ENCODE measurements at regions of chr5 and their contacts with region 1.

Region 1: GRCh38 chr5:157271740-157272271 is 5.9 kb downstream of the CYFIP2 start:
- DNase-seq: peak; percentile 94
- H3K4me3 Mint-ChIP-seq: peak overlapping the region; percentile 78
- H3K27ac Mint-ChIP-seq: peak overlapping the region; percentile 100
- H3K4me1 Mint-ChIP-seq: peaks cover 86% of the 10 kb centered on the region
- H3K27me3 Mint-ChIP-seq: no peaks in the 10 kb centered on the region

Region 2: DNA sequence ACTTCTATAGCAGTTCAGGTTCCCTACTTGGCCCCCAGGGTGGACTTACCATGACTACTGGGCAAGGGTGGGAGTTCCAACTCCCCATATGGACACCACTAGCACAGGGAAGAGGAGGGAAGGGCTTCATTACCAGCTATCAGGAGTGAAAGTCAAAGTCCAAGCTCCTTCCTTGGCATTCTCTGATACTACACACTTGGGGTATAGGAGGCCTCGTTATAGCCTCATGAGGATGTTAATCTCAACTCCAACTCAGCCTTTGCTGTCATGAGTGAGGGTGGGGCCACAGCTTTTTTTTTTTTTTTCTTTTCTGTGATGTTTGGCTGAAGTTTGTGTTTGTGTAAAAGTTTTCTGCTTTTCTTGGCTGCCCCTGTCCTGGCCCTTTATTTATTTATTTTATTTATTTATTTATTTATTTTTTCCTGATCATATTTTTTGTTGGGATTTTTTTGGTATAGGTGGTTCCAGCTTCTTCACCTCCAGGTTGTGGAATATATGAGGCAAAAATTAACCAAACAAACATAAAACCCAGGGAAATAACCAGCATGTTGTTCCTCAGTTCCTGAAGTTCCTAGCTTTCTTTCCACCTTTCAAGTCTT is 114.4 kb before region 1 on chr5:
- CTCF ChIA-PET with region 1: interaction called, 3 read pairs
- POLR2A ChIA-PET with region 1: interaction called, 11 read pairs
- DNase-seq: no peak
- H3K4me3 Mint-ChIP-seq: peak overlapping the region; percentile 0
- H3K27ac Mint-ChIP-seq: peak overlapping the region; percentile 50
- H3K4me1 Mint-ChIP-seq: peaks cover 75% of the 10 kb centered on the region
- H3K27me3 Mint-ChIP-seq: no peaks in the 10 kb centered on the region

Region 3: DNA sequence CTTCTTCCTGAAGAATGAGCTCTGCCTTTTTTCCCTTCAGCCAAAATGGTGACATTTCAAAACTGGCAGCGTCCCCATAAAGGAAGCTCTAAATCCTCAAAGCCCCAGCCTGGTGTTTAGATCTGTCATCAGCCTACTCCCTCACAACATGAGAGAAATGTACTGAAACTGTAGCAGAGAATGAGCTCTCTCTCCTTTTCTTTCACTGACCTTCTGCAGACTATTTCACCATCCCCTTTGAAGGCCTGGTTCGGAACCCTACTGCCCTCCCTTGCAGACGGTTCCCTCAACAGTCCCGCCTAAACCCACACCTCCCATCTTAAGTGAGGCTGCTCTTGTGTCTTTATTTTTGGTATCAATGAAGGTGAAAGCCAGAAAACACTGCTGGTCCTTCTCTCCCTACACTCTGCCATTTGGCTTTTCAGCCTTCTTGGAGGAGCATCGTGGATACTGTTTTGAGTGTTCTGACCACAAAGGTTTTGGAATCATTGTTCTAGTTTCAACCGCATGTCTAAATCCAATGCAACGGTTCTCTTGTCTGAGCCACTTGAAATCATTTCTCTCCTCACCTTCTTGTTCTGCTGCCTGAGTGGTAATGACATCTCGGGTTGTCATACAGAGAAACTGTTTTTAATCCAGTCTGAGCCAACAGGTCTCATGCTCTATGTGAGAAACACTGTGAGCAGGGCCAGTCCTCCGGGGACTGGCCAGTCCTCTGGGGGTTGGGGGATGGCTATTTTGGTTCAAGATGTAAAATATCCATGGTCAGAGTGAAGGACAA is 52.1 kb before region 1 on chr5:
- CTCF ChIA-PET with region 1: interaction called, 5 read pairs
- POLR2A ChIA-PET with region 1: interaction called, 32 read pairs
- DNase-seq: peak; percentile 36
- H3K4me3 Mint-ChIP-seq: peak overlapping the region; percentile 19
- H3K27ac Mint-ChIP-seq: peak overlapping the region; percentile 90
- H3K4me1 Mint-ChIP-seq: peaks cover 93% of the 10 kb centered on the region
- H3K27me3 Mint-ChIP-seq: no peaks in the 10 kb centered on the region

Region 4: DNA sequence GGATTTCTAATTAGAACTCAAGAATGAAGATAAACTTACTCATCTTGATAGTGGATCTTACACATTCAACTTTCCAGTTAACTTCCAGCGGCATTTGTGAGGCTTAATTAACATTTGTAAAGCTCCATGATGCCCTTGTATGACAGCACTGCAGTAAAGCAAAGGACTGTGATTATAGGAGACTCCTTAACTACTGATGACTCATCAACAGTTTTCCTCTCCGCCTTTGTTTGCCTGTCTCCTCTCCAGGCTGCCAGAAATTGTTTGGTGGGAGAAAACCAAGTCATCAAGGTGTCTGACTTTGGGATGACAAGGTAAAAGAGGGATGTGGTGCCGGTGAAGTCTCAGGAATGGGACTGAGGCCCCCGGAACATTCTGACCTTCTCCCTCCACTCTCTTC is 26.3 kb before region 1 on chr5:
- CTCF ChIA-PET with region 1: interaction called, 6 read pairs
- POLR2A ChIA-PET with region 1: interaction called, 145 read pairs
- DNase-seq: no peak
- H3K4me3 Mint-ChIP-seq: no peak overlapping the region
- H3K27ac Mint-ChIP-seq: peak overlapping the region; percentile 98
- H3K4me1 Mint-ChIP-seq: peaks cover 75% of the 10 kb centered on the region
- H3K27me3 Mint-ChIP-seq: no peaks in the 10 kb centered on the region

Region 5: GRCh38 chr5:157283434-157283833 is 11.6 kb after region 1 on chr5:
- CTCF ChIA-PET with region 1: interaction called, 3 read pairs
- POLR2A ChIA-PET with region 1: interaction called, 56 read pairs
- DNase-seq: peak; percentile 29
- H3K4me3 Mint-ChIP-seq: no peak overlapping the region
- H3K27ac Mint-ChIP-seq: peak overlapping the region; percentile 41
- H3K4me1 Mint-ChIP-seq: peaks cover 66% of the 10 kb centered on the region
- H3K27me3 Mint-ChIP-seq: no peaks in the 10 kb centered on the region

Region 6: GRCh38 chr5:157312492-157312891 is 40.7 kb after region 1 on chr5:
- CTCF ChIA-PET with region 1: interaction called, 27 read pairs
- POLR2A ChIA-PET with region 1: interaction called, 36 read pairs
- DNase-seq: peak; percentile 68
- H3K4me3 Mint-ChIP-seq: no peak overlapping the region
- H3K27ac Mint-ChIP-seq: peak overlapping the region; percentile 37
- H3K4me1 Mint-ChIP-seq: peaks cover 30% of the 10 kb centered on the region
- H3K27me3 Mint-ChIP-seq: no peaks in the 10 kb centered on the region

Region 7: GRCh38 chr5:157486221-157486681 is 214.4 kb after region 1 on chr5:
- CTCF ChIA-PET with region 1: no interaction called
- POLR2A ChIA-PET with region 1: no interaction called
- DNase-seq: no peak
- H3K4me3 Mint-ChIP-seq: no peak overlapping the region
- H3K27ac Mint-ChIP-seq: peak overlapping the region; percentile 63
- H3K4me1 Mint-ChIP-seq: peaks cover 62% of the 10 kb centered on the region
- H3K27me3 Mint-ChIP-seq: no peaks in the 10 kb centered on the region